Ovary (tissue), 10 donors: ENCODE measurements at regions of chr3 and their contacts with region 1.

Region 1: GRCh38 chr3:102301155-102301880 is 133.5 kb upstream of the ZPLD1 start:
- DNase-seq: no peak
- H3K4me3 ChIP-seq: no peak overlapping the region
- H3K27ac ChIP-seq: no peak overlapping the region
- H3K4me1 ChIP-seq: no peaks in the 10 kb centered on the region
- H3K27me3 ChIP-seq: no peaks in the 10 kb centered on the region
- CTCF ChIP-seq: no peak
- EP300 ChIP-seq: no peak
- POLR2A ChIP-seq: no peak

Region 2: DNA sequence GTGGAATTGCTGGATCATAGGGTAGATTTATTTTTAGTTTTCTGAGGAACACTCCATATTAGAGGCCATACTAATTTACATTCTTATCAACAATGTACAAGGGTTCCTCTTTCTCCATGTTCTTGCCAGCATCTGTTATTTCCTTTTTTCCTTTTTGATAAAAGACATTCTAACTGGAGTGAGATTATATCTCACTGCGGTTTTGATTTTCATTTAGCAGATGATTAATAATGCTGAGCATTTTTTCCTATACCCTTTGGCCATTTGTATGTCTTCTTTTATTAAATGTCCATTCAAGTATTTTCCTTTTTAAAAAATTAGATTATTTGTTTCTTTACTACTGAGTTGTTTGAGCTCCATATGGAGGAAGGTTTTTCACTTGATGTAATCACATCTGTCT is 1323.0 kb after region 1 on chr3:
- intact Hi-C with region 1: loop called in 1 of 4 experiments (anchors 5 kb)
- DNase-seq: no peak
- H3K4me3 ChIP-seq: no peak overlapping the region
- H3K27ac ChIP-seq: no peak overlapping the region
- H3K4me1 ChIP-seq: no peaks in the 10 kb centered on the region
- H3K27me3 ChIP-seq: no peaks in the 10 kb centered on the region
- CTCF ChIP-seq: no peak
- EP300 ChIP-seq: no peak
- POLR2A ChIP-seq: no peak

Region 3: DNA sequence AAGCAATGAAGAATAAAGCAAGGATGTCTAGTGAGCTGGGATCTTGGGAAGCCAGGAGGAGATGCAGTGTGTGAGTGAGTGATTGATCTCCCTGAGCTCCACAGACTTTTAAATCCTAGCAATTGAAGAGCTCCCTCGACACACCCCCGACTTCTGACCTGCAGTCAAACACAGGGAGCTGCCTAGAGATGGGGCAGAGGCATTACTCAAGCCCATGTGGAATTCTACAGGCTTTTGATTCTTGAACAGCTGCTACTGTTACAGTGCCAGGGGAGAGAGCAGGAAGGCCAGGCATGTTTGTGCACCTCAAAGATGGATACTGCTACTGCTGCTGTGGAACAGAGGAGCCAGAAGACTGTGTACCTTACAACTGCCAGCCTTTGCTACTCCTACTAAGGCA is 1662.3 kb after region 1 on chr3:
- intact Hi-C with region 1: no loop called
- DNase-seq: no peak
- H3K4me3 ChIP-seq: no peak overlapping the region
- H3K27ac ChIP-seq: no peak overlapping the region
- H3K4me1 ChIP-seq: no peaks in the 10 kb centered on the region
- H3K27me3 ChIP-seq: no peaks in the 10 kb centered on the region
- CTCF ChIP-seq: no peak
- EP300 ChIP-seq: no peak
- POLR2A ChIP-seq: no peak